ENCODE measurements at regions of chr10 and their contacts with region 1.

Region 1: GRCh38 chr10:74081192-74081803 is 69.3 kb downstream of the AP3M1 start:
- DNase-seq: peak; percentile 58
- ATAC-seq: peak; percentile 34
- H3K4me3 Mint-ChIP-seq: no peak overlapping the region
- H3K27ac Mint-ChIP-seq: no peak overlapping the region
- H3K4me1 Mint-ChIP-seq: peaks cover 53% of the 10 kb centered on the region
- H3K27me3 Mint-ChIP-seq: no peaks in the 10 kb centered on the region

Region 2: DNA sequence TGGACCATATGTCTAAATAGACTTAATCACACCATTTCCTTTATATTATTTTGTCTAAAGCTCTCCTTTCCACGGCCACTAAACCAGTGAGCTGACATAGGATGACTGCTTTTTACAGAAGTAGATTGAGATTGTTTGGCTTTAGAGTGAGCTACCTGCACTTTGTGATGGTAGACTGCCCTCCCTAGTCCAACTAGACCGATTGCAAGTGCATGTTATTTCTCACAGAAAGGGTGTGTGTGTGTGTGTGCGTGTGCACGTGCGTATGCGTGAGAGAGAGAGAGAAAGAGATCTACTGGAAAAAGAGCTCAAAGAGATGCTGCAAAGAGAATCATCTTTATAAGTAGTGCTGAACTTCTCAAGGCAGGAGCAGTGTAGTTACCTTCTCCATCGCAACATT is 22.6 kb before region 1 on chr10:
- CTCF ChIA-PET with region 1: interaction called, 11 read pairs
- DNase-seq: peak; percentile 54
- ATAC-seq: no peak
- H3K4me3 Mint-ChIP-seq: no peak overlapping the region
- H3K27ac Mint-ChIP-seq: no peak overlapping the region
- H3K4me1 Mint-ChIP-seq: peaks cover 39% of the 10 kb centered on the region
- H3K27me3 Mint-ChIP-seq: no peaks in the 10 kb centered on the region

Region 3: GRCh38 chr10:74189999-74190421 is 108.7 kb after region 1 on chr10:
- CTCF ChIA-PET with region 1: no interaction called
- DNase-seq: peak; percentile 55
- ATAC-seq: peak; percentile 88
- H3K4me3 Mint-ChIP-seq: peak overlapping the region; percentile 61
- H3K27ac Mint-ChIP-seq: peak overlapping the region; percentile 98
- H3K4me1 Mint-ChIP-seq: peaks cover 56% of the 10 kb centered on the region
- H3K27me3 Mint-ChIP-seq: no peaks in the 10 kb centered on the region

Measured in activated CD8-positive, alpha-beta memory T cell treated with anti-CD3 and anti-CD28 coated beads, Interleukin-2, amount 10 ng/mL, durations not matched to agents 7 days and 5 days (primary cell).